ENCODE measurements at regions of chr17 and their contacts with region 1.

Region 1: DNA sequence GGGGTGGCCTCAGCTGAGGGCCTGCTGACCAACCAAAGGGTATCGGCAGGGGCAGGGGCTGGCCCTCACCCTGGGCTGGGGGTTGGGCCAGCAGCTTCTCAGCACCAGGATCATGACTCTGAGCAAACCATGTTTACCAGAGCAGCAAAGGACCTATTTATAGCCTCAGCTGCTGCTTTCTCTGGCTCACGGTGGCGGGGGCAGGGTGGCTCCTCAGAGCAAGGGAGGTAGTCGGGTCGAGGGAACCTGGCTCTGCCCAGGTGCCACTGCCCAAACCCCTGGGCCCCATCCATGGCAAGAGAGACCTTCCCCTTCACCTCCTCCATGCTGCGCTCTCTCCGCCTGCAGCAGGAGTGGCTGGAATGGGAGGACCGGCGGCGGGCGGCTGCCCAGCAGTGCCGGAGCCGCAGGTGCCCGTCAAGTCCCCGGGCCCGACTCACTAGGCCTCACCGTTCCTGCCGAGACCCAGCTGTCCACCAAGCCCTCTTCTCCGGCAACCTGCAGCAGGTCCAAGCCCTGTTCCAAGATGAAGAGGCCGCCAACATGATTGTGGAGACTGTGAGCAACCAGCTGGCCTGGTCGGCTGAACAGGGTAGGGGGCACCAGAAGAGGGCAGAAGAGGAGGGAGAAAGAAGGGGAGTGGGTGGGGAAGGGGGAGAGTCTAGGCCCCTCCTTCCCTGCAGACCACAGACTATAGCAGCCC is at the start of gene ASB16:
- DNase-seq: no peak
- H3K4me3 Mint-ChIP-seq: no peak within 1 kb of the TSS
- H3K27ac Mint-ChIP-seq: no peak within 1 kb of the TSS
- H3K4me1 Mint-ChIP-seq: peaks cover 5% of the 10 kb centered on the region
- H3K27me3 Mint-ChIP-seq: no peaks in the 10 kb centered on the region
- total RNA-seq, gene ASB16: 0.38 TPM in 1 of 2 experiments, not detected in the other

Region 2: GRCh38 chr17:44044067-44044466 is 126.6 kb before region 1 on chr17:
- CTCF ChIA-PET with region 1: interaction called, 10 read pairs
- POLR2A ChIA-PET with region 1: no interaction called
- DNase-seq: no peak
- H3K4me3 Mint-ChIP-seq: no peak overlapping the region
- H3K27ac Mint-ChIP-seq: no peak overlapping the region
- H3K4me1 Mint-ChIP-seq: peaks cover 35% of the 10 kb centered on the region
- H3K27me3 Mint-ChIP-seq: no peaks in the 10 kb centered on the region

Region 3: GRCh38 chr17:44070455-44071197 is 100.0 kb before region 1 on chr17 and contains the start of gene G6PC3:
- CTCF ChIA-PET with region 1: no interaction called
- POLR2A ChIA-PET with region 1: no interaction called
- DNase-seq: peak; percentile 88
- H3K4me3 Mint-ChIP-seq: peak within 1 kb of the TSS; percentile 88
- H3K27ac Mint-ChIP-seq: peak within 1 kb of the TSS; percentile 85
- H3K4me1 Mint-ChIP-seq: peaks cover 39% of the 10 kb centered on the region
- H3K27me3 Mint-ChIP-seq: no peaks in the 10 kb centered on the region
- total RNA-seq, gene G6PC3: 19.3 to 19.9 TPM

Region 4: DNA sequence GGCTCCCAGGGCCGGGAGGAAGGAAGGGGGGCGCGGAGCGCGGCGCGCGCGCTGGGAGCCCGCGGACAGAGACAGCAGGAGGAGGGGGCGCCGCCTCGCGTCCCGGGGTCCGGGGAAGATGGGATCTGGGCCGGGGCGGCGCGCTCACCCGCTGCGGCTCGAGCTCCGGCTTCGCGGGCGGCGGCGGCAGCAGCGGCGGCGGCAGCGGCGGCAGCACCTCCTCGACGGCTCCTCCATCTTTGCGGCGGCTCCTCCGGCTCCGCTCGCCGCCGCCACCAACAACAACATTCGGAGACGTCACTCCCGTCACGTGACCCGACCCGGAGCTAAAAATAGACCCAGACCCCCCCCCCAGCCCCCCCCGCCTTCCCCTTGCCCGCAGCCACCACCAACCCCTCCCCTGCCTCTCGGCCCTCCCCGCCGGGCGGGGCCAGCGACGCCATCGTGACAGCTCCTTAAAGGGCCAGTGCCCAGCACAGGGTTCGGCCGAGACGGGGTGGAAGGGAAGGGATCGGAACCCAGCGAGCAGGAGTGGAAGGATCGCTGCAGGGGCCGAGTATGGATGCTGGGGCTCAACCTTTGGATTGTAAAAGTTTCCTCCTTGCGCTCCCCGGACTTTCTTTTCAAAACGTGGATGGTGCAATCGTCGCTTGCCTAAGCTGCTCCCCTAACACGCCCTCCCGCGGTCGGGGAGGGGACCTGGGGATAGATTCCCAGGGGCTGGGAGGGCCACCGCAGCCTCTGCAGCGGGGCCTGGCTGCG is 47.1 kb before region 1 on chr17 and contains the start of gene HDAC5:
- CTCF ChIA-PET with region 1: interaction called, 11 read pairs
- POLR2A ChIA-PET with region 1: interaction called, 3 read pairs
- DNase-seq: peak; percentile 97
- H3K4me3 Mint-ChIP-seq: peak within 1 kb of the TSS; percentile 90
- H3K27ac Mint-ChIP-seq: peak within 1 kb of the TSS; percentile 83
- H3K4me1 Mint-ChIP-seq: peaks cover 22% of the 10 kb centered on the region
- H3K27me3 Mint-ChIP-seq: peaks cover 2% of the 10 kb centered on the region
- total RNA-seq, gene HDAC5: 42.2 to 42.7 TPM

Region 5: GRCh38 chr17:44147812-44148211 is 22.8 kb before region 1 on chr17:
- CTCF ChIA-PET with region 1: interaction called, 12 read pairs
- POLR2A ChIA-PET with region 1: interaction called, 4 read pairs
- DNase-seq: no peak
- H3K4me3 Mint-ChIP-seq: no peak overlapping the region
- H3K27ac Mint-ChIP-seq: no peak overlapping the region
- H3K4me1 Mint-ChIP-seq: peaks cover 27% of the 10 kb centered on the region
- H3K27me3 Mint-ChIP-seq: no peaks in the 10 kb centered on the region

Region 6: DNA sequence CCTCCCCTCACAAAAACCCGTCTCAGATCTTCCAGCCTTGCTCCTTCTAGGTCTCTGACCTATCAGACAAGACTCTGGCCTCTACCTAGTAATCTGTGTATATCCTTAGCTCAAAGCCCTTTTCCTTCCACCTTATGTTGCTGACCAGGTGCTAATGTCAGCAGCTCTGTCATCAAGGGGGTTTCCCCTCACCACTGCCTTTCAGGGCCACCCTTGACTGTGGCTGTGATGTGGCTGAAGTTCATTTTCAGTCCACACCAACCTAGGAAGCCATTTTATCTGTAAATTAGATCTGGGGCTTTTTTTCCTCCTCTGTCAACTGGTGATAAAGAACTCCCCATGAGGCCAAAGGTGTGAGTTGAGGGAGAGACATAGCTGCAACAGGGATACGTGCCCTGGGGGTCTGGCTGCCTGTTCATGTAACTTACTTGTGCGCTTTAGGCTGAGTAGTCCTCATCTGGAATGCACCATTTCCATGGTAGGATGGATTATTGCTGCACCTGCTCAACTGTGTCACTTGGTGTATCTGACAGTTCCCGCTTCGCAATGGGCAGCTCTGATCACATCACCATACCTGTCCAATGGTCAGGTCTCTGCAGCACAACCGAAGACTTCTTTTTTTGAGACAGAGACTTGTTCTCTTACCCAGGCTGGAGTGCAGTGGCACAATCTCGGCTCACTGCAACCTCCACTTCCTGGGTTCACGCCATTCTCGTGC is 123.0 kb after region 1 on chr17:
- CTCF ChIA-PET with region 1: no interaction called
- POLR2A ChIA-PET with region 1: no interaction called
- DNase-seq: no peak
- H3K4me3 Mint-ChIP-seq: no peak overlapping the region
- H3K27ac Mint-ChIP-seq: no peak overlapping the region
- H3K4me1 Mint-ChIP-seq: no peaks in the 10 kb centered on the region
- H3K27me3 Mint-ChIP-seq: peaks cover 17% of the 10 kb centered on the region

Measured in activated CD4-positive, alpha-beta memory T cell treated with anti-CD3 and anti-CD28 coated beads, Interleukin-2, amount 10 ng/mL, durations not matched to agents 7 days and 5 days (primary cell).